ENCODE measurements at regions of chr9 and their contacts with region 1.

Region 1: GRCh38 chr9:96491079-96491879 is 41.3 kb downstream of the HABP4 start:
- DNase-seq: no peak
- H3K4me3 Mint-ChIP-seq: no peak overlapping the region
- H3K27ac Mint-ChIP-seq: peak overlapping the region; percentile 74
- H3K4me1 Mint-ChIP-seq: peaks cover 2% of the 10 kb centered on the region
- H3K27me3 Mint-ChIP-seq: no peaks in the 10 kb centered on the region

Region 2: GRCh38 chr9:96302021-96302420 is 189.3 kb before region 1 on chr9 and contains the start of gene HSD17B3:
- intact Hi-C with region 1: no loop called
- DNase-seq: no peak
- H3K4me3 Mint-ChIP-seq: no peak within 1 kb of the TSS
- H3K27ac Mint-ChIP-seq: no peak within 1 kb of the TSS
- H3K4me1 Mint-ChIP-seq: no peaks in the 10 kb centered on the region
- H3K27me3 Mint-ChIP-seq: peaks cover 2% of the 10 kb centered on the region
- total RNA-seq, gene HSD17B3: not detected in 2 replicates

Region 3: DNA sequence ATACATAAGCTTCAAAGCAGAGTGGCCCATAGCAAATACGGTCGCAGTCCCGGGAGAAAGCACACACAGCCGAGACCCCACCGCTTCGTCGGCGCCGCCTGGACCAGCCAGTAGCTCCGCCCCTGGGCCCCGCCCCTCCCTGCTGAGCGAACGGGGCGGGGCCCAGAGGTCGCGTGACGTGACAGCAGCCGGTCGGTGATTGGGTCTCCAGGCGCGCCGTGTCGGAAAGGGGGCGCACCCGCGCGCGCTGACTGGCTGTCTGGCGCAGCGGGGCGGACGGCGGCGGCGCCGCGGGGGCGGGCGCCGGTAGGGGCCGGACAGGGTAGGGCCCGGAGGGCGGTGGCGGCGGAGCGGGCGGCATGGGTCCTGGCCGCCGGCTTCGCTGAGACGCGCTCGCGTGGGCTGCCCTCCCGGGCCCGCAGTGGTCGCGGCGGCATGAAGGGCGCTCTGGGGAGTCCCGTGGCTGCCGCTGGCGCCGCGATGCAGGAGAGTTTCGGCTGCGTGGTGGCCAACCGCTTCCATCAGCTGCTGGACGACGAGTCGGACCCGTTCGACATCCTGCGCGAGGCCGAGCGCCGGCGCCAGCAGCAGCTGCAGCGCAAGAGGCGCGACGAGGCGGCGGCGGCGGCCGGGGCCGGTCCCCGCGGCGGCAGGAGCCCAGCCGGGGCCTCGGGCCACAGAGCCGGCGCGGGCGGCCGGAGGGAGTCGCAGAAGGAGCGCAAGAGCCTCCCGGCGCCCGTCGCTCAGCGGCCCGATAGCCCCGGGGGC is 41.2 kb before region 1 on chr9 and contains the start of gene HABP4:
- intact Hi-C with region 1: loop called (anchors 5 kb)
- DNase-seq: peak; percentile 93
- H3K4me3 Mint-ChIP-seq: peak within 1 kb of the TSS; percentile 86
- H3K27ac Mint-ChIP-seq: no peak within 1 kb of the TSS
- H3K4me1 Mint-ChIP-seq: peaks cover 28% of the 10 kb centered on the region
- H3K27me3 Mint-ChIP-seq: peaks cover 11% of the 10 kb centered on the region
- total RNA-seq, gene HABP4: 14.3 and 14.4 TPM in 2 replicates